Calu3 (cell line): ENCODE measurements at regions of chr14 and their contacts with region 1.

Region 1: DNA sequence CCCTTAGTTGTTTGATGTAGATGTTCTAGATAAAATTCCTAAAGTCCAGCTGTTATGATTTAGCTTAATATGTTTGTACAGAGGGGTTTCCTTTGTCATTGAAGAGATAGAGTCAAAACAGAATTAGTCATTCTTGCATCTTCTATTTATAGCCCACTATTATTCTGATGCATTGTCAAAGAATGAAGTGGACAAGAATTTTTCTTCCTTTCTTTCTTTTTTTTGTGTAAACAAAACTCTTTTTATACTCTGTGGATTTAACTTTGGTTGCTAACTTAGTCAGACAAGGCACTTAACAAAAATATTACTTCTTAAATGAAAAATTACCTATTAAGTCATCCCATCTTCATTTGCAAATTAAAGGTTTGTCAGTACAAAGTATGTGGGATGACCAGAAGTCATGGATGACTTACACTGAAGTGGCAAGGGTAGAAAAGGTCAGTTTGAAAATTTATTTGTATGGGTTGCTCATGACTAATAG is 215.6 kb upstream of the DDHD1 start:
- DNase-seq: no peak
- H3K4me3 Mint-ChIP-seq: no peak overlapping the region
- H3K27ac Mint-ChIP-seq: no peak overlapping the region
- H3K4me1 Mint-ChIP-seq: no peaks in the 10 kb centered on the region
- H3K27me3 Mint-ChIP-seq: peaks cover 37% of the 10 kb centered on the region
- CTCF ChIP-seq: no peak

Region 2: GRCh38 chr14:53979747-53980642 is 611.2 kb after region 1 on chr14:
- CTCF ChIA-PET with region 1: interaction called, 11 read pairs
- intact Hi-C with region 1: no loop called
- DNase-seq: no peak
- H3K4me3 Mint-ChIP-seq: no peak overlapping the region
- H3K27ac Mint-ChIP-seq: no peak overlapping the region
- H3K4me1 Mint-ChIP-seq: no peaks in the 10 kb centered on the region
- H3K27me3 Mint-ChIP-seq: no peaks in the 10 kb centered on the region
- CTCF ChIP-seq: no peak